ENCODE measurements at regions of chr5 and their contacts with region 1.

Region 1: GRCh38 chr5:16934123-16934522 is 2.0 kb downstream of the MYO10 start:
- DNase-seq: peak; percentile 72
- ATAC-seq: peak; percentile 59
- H3K4me3 ChIP-seq: peak overlapping the region; percentile 64
- H3K27ac ChIP-seq: peak overlapping the region; percentile 78
- H3K4me1 ChIP-seq: peaks cover 45% of the 10 kb centered on the region
- H3K27me3 ChIP-seq: no peaks in the 10 kb centered on the region
- CTCF ChIP-seq: peak; percentile 92

Region 2: GRCh38 chr5:16392718-16393117 is 541.4 kb before region 1 on chr5:
- intact Hi-C with region 1: no loop called
- DNase-seq: no peak
- ATAC-seq: no peak
- H3K4me3 ChIP-seq: no peak overlapping the region
- H3K27ac ChIP-seq: no peak overlapping the region
- H3K4me1 ChIP-seq: no peaks in the 10 kb centered on the region
- H3K27me3 ChIP-seq: no peaks in the 10 kb centered on the region
- CTCF ChIP-seq: no peak

Region 3: DNA sequence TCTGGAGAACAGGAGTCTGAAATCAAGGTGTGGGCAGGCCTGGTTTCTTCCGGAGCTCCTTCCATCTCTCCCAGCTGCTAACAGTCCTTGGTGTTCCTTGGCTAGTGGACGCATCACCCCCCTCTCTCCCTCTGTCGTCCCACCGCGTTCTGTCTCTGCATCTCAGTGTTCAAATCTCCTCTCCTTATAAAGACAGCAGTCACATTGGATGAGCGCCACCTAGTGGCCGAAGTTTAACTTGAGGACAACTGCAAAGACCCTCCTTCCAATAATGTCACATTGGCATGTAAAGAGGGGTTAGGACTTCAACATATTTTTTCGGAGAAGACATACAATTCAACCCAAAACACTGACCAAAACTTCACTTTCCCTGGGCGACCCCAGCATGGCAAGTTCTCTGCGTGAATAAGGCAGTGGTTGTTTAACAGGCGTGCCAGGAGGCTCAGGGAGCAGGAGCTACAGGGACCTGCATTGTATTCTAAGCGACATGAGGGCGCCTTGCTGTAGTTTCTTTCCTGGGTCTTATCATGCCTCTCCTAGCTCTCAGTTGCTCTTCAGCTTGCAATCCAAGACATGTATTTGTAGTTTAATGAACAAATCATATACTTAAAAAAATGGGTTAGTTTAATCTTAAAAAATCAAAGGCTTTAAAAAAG is 255.4 kb after region 1 on chr5:
- intact Hi-C with region 1: loop called (anchors 10 kb)
- DNase-seq: peak; percentile 77
- ATAC-seq: peak; percentile 79
- H3K4me3 ChIP-seq: no peak overlapping the region
- H3K27ac ChIP-seq: peak overlapping the region; percentile 8
- H3K4me1 ChIP-seq: peaks cover 14% of the 10 kb centered on the region
- H3K27me3 ChIP-seq: no peaks in the 10 kb centered on the region
- CTCF ChIP-seq: peak; percentile 91

Measured in upper lobe of right lung (tissue), 1 donor.